Posterior vena cava (tissue), 2 donors: ENCODE measurements at regions of chr9 and their contacts with region 1.

Region 1: DNA sequence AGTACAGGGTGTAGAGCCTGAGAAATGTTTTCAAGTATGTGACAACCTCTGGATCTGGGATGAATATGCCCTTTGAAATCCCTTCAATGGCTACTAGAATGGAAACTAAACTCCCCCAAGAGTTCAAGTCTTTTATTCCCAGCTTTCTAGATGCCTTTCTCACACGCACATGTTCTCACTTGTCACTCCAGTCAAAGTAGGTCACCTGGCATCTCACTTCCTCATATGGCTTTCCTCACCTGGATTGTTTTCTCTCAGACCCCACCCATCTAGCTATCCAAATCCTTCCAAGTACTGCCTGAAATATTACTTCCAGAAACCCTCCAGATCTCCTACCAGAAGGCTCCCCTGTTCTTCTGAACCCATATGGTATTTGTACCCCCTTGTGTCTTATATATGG is 615.4 kb upstream of the KLF4 start:
- DNase-seq: no peak

Region 2: DNA sequence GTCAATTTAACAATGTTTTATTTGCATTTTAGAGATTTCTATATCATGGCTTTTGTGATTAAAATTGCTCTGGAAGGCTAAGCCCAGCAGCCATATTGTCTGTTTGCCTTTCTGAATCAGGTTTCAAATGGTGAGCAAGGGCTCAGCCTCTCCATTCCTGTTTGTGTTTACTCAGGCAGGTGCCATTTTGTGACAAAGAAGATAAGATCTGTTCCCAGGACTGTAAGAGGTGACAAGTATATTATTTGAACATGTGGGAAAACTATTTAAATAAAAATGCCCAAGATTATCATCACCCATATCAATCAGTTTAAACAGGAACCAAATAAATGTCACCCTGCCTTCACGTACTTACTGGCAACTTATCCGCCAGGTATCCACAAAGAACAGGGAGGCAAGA is 25.9 kb after region 1 on chr9:
- intact Hi-C with region 1: loop called in 1 of 2 experiments (anchors 1 kb)
- DNase-seq: no peak